ENCODE measurements at regions of chr5 and their contacts with region 1.

Region 1: GRCh38 chr5:14463629-14464028 is 118.0 kb upstream of the OTULINL start:
- DNase-seq: peak; percentile 77
- H3K27ac ChIP-seq: peak overlapping the region; percentile 84
- CTCF ChIP-seq: no peak

Region 2: GRCh38 chr5:14174230-14174637 is 289.4 kb before region 1 on chr5:
- CTCF ChIA-PET with region 1: no interaction called
- POLR2A ChIA-PET with region 1: no interaction called
- DNase-seq: no peak
- H3K27ac ChIP-seq: peak overlapping the region; percentile 47
- CTCF ChIP-seq: no peak

Region 3: DNA sequence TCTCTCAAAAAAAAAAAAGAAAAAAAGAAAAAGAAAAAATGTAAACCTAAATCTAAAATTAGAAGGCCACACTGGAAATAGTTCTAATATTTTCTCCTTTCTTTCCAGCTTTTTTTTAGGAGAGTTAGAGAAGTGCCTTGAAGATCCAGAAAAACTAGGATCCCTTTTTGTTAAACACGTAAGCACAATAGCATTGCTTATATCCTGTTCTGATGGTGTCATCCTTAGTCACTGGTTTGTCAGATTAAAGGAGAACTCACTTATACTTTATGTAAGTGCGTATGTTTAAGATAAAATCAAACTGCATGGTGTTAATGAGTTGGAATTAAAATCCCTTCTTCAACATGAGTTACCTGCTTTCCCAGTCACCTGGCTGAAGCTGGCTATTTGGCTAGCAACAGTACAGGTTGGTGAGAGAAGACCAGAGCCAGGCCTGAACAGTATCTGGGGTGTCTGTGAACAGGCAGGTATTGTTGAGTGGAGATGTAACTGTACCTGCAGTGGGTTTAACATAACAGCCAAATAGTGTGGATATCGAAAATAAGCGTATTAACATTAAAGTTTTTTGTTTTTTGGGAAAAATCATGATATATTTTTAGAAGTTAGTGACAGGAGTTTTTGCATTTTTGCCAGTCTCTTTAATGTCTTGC is 13.3 kb after region 1 on chr5:
- CTCF ChIA-PET with region 1: no interaction called
- POLR2A ChIA-PET with region 1: interaction called, 14 read pairs
- DNase-seq: peak; percentile 71
- H3K27ac ChIP-seq: peak overlapping the region; percentile 54; the same call in 1 of the 2 replicates
- CTCF ChIP-seq: no peak